CD8-positive, alpha-beta T cell (primary cell): ENCODE measurements at regions of chr17 and their contacts with region 1.

Region 1: GRCh38 chr17:76182016-76182764 is 41.1 kb upstream of the FOXJ1 start:
- DNase-seq: peak; percentile 90 to 98 (median 93)
- ATAC-seq: peak; percentile 77
- H3K4me3 ChIP-seq: no peak overlapping the region
- H3K4me3 Mint-ChIP-seq: peak overlapping the region; percentile 64
- H3K27ac ChIP-seq: peak overlapping the region; percentile 42 to 46
- H3K27ac Mint-ChIP-seq: peak overlapping the region; percentile 95
- H3K4me1 ChIP-seq: peaks cover 73% of the 10 kb centered on the region
- H3K4me1 Mint-ChIP-seq: peaks cover 65% of the 10 kb centered on the region
- H3K27me3 ChIP-seq: no peaks in the 10 kb centered on the region
- H3K27me3 Mint-ChIP-seq: no peaks in the 10 kb centered on the region
- CTCF ChIP-seq: peak; percentile 69

Region 2: DNA sequence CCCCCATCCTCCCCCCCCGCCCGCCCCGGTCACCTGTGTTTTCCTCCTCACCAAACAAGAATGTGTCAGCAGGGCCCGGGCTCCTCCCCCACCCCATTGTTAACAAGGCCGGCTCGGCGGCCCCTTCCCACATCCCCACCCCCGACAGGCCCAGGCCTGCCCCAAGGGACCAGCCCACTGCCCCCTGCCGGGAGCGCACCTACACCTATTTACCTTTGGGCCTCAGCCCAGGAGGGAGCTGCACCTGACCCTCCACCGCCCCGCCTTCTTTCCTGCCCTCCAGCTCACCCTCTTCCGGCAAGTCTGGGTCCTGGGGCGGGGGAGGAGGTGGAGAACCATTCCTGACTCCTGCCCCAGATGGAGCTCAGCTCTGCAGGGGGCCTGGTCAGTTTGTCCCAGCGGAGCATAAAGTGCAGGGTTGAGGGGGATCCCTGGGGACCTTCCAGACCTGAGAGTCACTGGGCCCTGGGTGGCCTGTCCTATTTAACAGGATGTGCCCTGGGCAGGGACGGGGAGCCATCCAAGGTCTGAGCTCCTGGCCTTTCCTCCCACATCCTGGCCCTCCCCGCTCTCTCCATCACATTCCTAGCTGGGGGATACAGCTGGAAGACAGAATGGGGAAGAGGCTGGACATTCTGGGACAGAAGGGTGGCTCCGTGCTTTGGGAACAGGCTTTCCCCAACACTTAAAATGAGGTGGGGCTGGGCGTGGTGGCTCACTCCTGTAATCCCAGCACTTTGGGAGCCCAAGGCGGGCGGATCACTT is 49.4 kb before region 1 on chr17:
- CTCF ChIA-PET with region 1: interaction called, 177 read pairs
- POLR2A ChIA-PET with region 1: interaction called, 3 read pairs
- intact Hi-C with region 1: no loop called
- DNase-seq: no peak
- ATAC-seq: no peak
- H3K4me3 ChIP-seq: no peak overlapping the region
- H3K4me3 Mint-ChIP-seq: no peak overlapping the region
- H3K27ac ChIP-seq: no peak overlapping the region
- H3K27ac Mint-ChIP-seq: no peak overlapping the region
- H3K4me1 ChIP-seq: peaks cover 27% of the 10 kb centered on the region
- H3K4me1 Mint-ChIP-seq: peaks cover 29% of the 10 kb centered on the region
- H3K27me3 ChIP-seq: no peaks in the 10 kb centered on the region
- H3K27me3 Mint-ChIP-seq: no peaks in the 10 kb centered on the region
- CTCF ChIP-seq: no peak

Region 3: DNA sequence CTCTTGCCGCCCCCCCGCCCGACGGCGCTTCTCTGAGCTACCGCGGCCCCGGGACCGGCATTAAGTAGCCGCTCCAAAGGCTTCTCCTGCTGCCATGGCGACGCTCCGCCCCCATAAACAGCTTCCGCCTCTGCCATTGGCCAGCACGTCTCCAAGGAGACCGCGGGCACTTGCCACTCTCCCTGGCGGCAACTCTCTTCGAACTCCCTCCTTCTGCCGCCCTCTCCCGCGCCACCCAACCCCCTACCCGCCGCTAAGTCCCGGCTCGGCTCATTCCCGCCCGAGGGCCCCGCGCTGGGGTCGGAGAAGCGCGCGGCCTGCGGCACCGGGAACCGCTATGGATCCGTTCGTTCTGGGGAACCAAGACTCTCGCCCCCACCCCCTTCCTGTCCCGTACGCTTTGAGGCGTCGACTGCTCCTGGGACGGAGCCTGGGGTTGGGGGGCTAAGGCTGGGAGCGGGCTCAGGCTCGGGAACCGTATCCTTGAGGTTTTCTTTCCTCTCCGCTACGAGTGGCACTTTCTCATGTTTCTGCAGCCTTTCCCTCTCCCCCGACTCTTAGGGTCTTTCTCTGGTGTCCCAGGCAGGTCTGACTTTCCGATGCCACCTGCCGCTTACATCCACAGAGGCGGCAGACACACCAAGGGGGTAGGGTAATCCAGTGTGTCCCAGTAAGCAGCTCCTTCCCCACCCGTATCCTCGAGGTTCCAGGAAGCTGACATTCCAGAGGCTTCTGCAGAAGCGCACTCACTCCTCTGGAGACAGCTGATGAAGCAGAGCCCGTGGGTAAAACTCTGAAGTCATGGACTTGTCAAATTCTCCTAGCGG is 40.8 kb before region 1 on chr17 and contains the start of gene FOXJ1:
- CTCF ChIA-PET with region 1: interaction called, 76 read pairs
- POLR2A ChIA-PET with region 1: interaction called, 57 read pairs
- intact Hi-C with region 1: loop called (anchors 1 kb)
- DNase-seq: peak; percentile 86 to 96 (median 91)
- ATAC-seq: peak; percentile 55
- H3K4me3 ChIP-seq: peak within 1 kb of the TSS; percentile 54 to 67
- H3K4me3 Mint-ChIP-seq: peak within 1 kb of the TSS; percentile 88
- H3K27ac ChIP-seq: peak within 1 kb of the TSS; percentile 45 to 59
- H3K27ac Mint-ChIP-seq: peak within 1 kb of the TSS; percentile 88
- H3K4me1 ChIP-seq: peaks cover 74% of the 10 kb centered on the region
- H3K4me1 Mint-ChIP-seq: peaks cover 65% of the 10 kb centered on the region
- H3K27me3 ChIP-seq: peaks cover 0 to 8% of the 10 kb centered on the region in 2 experiments
- H3K27me3 Mint-ChIP-seq: no peaks in the 10 kb centered on the region
- CTCF ChIP-seq: no peak
- total RNA-seq, gene FOXJ1: 2.2 to 2.7 TPM

Region 4: GRCh38 chr17:76153640-76154039 is 28.6 kb before region 1 on chr17:
- CTCF ChIA-PET with region 1: interaction called, 63 read pairs
- POLR2A ChIA-PET with region 1: interaction called, 23 read pairs
- intact Hi-C with region 1: no loop called
- DNase-seq: peak in 1 of 9 experiments; percentile 43
- ATAC-seq: no peak
- H3K4me3 ChIP-seq: no peak overlapping the region
- H3K4me3 Mint-ChIP-seq: no peak overlapping the region
- H3K27ac ChIP-seq: peak overlapping the region in 1 of 2 experiments; percentile 49
- H3K27ac Mint-ChIP-seq: peak overlapping the region; percentile 99
- H3K4me1 ChIP-seq: peaks cover 52% of the 10 kb centered on the region
- H3K4me1 Mint-ChIP-seq: peaks cover 69% of the 10 kb centered on the region
- H3K27me3 ChIP-seq: no peaks in the 10 kb centered on the region
- H3K27me3 Mint-ChIP-seq: no peaks in the 10 kb centered on the region
- CTCF ChIP-seq: no peak

Region 5: DNA sequence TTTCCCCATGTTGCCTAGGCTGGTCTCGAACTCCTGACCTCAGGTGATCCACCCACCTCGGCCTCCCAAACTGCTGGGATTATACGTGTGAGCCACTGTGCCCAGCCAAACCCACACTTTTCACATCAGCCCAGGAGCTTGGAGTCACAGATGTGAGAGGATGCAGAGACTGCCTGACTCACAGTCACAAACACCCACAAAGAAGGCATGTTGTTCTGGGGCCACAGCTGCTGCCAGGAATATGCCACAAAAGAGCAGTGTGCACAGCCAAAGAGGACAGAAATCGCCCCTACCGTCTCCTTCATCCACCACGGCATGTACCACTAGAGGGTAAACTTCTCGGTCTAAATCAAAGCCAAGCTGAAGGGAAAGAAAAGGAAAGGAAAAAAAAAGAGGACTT is 16.0 kb before region 1 on chr17:
- CTCF ChIA-PET with region 1: interaction called, 16 read pairs
- POLR2A ChIA-PET with region 1: interaction called, 9 read pairs
- intact Hi-C with region 1: no loop called
- DNase-seq: peak in 1 of 9 experiments; percentile 25
- ATAC-seq: no peak
- H3K4me3 ChIP-seq: no peak overlapping the region
- H3K4me3 Mint-ChIP-seq: no peak overlapping the region
- H3K27ac ChIP-seq: no peak overlapping the region
- H3K27ac Mint-ChIP-seq: no peak overlapping the region
- H3K4me1 ChIP-seq: no peaks in the 10 kb centered on the region
- H3K4me1 Mint-ChIP-seq: peaks cover 6% of the 10 kb centered on the region
- H3K27me3 ChIP-seq: no peaks in the 10 kb centered on the region
- H3K27me3 Mint-ChIP-seq: no peaks in the 10 kb centered on the region
- CTCF ChIP-seq: no peak

Region 6: DNA sequence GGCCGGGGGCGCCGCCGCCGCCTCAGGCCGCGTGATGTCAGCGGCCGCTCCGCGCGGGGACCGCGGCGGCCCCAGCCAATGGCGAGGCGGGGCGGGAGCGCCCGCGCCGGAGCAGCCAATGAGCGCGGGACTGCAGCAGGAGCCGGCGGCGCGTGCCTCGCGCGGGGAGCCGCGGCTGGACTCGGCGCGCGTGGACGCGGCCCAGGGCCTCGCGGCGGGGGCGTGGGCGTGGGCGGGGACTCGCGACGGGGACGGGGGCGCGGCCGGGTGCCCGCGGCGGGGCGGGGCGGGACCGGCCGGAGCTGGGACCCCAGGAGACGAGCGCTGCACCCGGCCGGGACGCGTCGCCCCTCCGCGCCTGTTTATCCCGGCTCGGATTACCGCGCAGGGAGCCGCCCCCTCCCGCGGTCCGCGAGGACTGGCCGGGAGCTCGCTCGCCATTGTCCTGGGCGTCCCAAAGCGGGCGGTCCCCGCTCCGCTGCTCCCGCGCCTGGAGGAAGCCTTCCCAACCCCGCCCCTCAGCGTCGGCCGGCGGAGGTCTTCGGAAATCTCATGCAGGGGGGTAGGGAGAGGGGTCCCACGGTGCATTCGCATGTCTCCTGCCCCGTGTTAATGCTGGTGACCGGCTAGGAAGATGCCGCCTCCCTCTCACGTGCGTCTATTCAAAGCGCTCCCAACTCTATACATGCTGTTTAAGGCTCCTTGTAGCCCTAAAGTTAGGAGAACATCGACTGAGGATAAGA is 58.4 kb after region 1 on chr17 and contains the start of gene RNF157:
- CTCF ChIA-PET with region 1: interaction called, 55 read pairs
- POLR2A ChIA-PET with region 1: interaction called, 14 read pairs
- intact Hi-C with region 1: loop called in 1 of 2 experiments (anchors 5 kb)
- DNase-seq: peak in 8 of 9 experiments; percentile 48 to 87 (median 64)
- ATAC-seq: peak; percentile 88
- H3K4me3 ChIP-seq: peak within 1 kb of the TSS; percentile 61 to 77
- H3K4me3 Mint-ChIP-seq: peak within 1 kb of the TSS; percentile 87
- H3K27ac ChIP-seq: peak within 1 kb of the TSS; percentile 49 to 63
- H3K27ac Mint-ChIP-seq: peak within 1 kb of the TSS; percentile 91
- H3K4me1 ChIP-seq: peaks cover 52% of the 10 kb centered on the region
- H3K4me1 Mint-ChIP-seq: peaks cover 54% of the 10 kb centered on the region
- H3K27me3 ChIP-seq: no peaks in the 10 kb centered on the region
- H3K27me3 Mint-ChIP-seq: no peaks in the 10 kb centered on the region
- CTCF ChIP-seq: no peak
- total RNA-seq, gene RNF157: 22.3 to 25.5 TPM

Region 7: GRCh38 chr17:76246080-76247066 is 64.2 kb after region 1 on chr17:
- CTCF ChIA-PET with region 1: interaction called, 55 read pairs
- POLR2A ChIA-PET with region 1: interaction called, 8 read pairs
- intact Hi-C with region 1: no loop called
- DNase-seq: peak in 6 of 9 experiments; percentile 34 to 71 (median 47)
- ATAC-seq: peak; percentile 86
- H3K4me3 ChIP-seq: no peak overlapping the region
- H3K4me3 Mint-ChIP-seq: peak overlapping the region; percentile 48
- H3K27ac ChIP-seq: peak overlapping the region; percentile 5 to 27
- H3K27ac Mint-ChIP-seq: peak overlapping the region; percentile 90
- H3K4me1 ChIP-seq: peaks cover 56% of the 10 kb centered on the region
- H3K4me1 Mint-ChIP-seq: peaks cover 59% of the 10 kb centered on the region
- H3K27me3 ChIP-seq: no peaks in the 10 kb centered on the region
- H3K27me3 Mint-ChIP-seq: no peaks in the 10 kb centered on the region
- CTCF ChIP-seq: no peak

Region 8: DNA sequence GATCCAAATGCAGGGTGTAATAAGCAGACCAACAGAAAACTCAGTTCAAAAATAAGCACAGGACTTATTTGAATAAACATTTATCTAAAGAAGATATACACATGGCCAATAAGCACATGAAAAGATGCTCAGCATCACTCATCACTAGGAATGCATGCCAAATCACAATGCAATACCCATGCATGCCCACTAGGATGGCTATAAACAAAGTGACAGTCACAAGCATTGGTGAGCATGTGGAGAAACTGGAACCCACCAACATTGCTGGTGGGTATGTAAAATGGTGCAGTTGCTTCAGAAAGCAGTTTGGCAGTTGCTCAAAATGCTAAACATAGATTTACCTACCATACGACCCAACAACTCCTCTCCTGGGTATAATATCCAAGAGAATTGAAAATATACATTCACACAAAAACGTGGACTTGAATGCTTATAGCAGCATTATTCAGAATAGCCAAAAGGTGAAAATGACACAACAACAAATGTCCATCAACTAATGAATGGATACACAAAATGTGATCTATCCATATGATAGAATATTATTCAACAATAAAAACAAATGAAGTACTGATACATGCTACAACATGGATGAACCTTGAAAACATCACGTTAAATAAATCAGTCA is 250.6 kb after region 1 on chr17:
- CTCF ChIA-PET with region 1: no interaction called
- POLR2A ChIA-PET with region 1: no interaction called
- intact Hi-C with region 1: no loop called
- DNase-seq: peak in 1 of 9 experiments; percentile 29
- ATAC-seq: peak; percentile 54
- H3K4me3 ChIP-seq: no peak overlapping the region
- H3K4me3 Mint-ChIP-seq: no peak overlapping the region
- H3K27ac ChIP-seq: no peak overlapping the region
- H3K27ac Mint-ChIP-seq: no peak overlapping the region
- H3K4me1 ChIP-seq: no peaks in the 10 kb centered on the region
- H3K4me1 Mint-ChIP-seq: peaks cover 24% of the 10 kb centered on the region
- H3K27me3 ChIP-seq: no peaks in the 10 kb centered on the region
- H3K27me3 Mint-ChIP-seq: no peaks in the 10 kb centered on the region
- CTCF ChIP-seq: peak; percentile 53